ENCODE measurements at regions of chr18 and their contacts with region 1.

Region 1: GRCh38 chr18:77000527-77000926 is 132.1 kb downstream of the MBP start:
- DNase-seq: peak; percentile 74
- CTCF ChIP-seq: peak; percentile 96

Region 2: DNA sequence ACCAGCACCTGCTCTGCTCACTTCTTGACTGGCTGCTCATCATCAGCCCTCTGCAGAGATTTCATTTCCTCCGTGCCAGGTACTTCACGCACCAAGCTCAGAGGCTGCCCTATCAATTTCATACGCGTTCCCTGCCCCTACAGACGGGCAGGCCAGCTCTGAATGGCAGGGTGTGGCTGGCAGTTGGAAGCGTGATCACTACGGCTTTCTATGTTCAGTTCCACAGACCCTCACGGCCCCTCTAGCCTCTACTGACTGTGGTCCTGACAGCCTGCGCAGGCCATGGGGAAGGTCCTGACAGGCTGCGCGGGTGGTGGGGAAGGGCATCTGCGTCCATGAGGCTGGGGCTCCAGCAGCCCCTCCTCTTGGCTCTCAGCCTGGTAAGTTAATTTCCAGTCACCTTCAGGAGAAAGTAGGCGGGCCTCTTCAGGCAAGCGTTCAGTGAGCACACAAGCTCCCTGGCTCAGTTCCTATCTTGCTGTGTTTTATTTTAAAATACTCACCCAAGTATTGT is 23.4 kb before region 1 on chr18:
- CTCF ChIA-PET with region 1: interaction called, 75 read pairs
- POLR2A ChIA-PET with region 1: no interaction called
- DNase-seq: no peak
- CTCF ChIP-seq: no peak

Region 3: GRCh38 chr18:77013811-77014521 is 13.4 kb after region 1 on chr18:
- CTCF ChIA-PET with region 1: interaction called, 40 read pairs
- POLR2A ChIA-PET with region 1: no interaction called
- DNase-seq: no peak
- CTCF ChIP-seq: no peak

Region 4: DNA sequence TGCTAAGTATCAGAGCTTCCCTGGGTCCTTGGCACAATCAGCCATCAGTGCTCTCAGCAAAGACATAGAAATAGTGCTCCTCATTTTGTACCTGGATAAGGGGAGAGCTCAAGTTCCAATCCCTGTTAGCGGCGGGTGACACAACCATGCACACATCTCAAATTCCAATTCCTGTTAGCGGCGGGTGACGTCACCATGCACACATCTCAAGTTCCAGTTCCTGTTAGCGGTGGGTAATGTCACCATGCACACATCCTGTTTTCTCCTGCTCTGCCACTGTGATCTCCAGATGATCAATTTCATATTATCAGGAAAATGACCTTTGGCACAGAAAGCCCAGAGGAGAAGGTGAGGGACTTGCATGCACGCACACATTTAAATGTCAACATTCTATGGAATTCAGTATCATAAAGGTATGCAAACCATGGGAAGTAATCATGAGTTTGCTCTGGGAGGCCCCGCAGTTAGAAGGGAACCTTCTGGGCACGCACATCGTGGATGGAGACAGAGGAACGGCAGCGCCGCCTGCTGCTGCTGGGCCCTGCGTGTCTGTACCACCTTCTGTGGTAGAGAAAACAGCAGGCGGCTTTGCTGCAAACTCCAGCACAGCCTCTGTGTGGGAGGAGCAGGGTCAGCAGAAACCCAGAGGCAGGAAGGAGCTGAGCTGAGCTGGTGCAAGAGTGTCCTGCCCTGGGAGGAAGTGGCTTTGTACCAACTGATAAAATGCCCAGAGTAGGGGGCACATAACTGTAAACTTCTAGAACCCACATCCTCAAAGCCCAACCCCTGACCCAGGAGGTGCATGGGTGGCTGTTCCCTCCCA is 54.3 kb after region 1 on chr18:
- CTCF ChIA-PET with region 1: interaction called, 42 read pairs
- POLR2A ChIA-PET with region 1: no interaction called
- DNase-seq: peak; percentile 84
- CTCF ChIP-seq: peak; percentile 89

Region 5: GRCh38 chr18:77207540-77207939 is 207.0 kb after region 1 on chr18:
- CTCF ChIA-PET with region 1: interaction called, 48 read pairs
- POLR2A ChIA-PET with region 1: no interaction called
- DNase-seq: no peak
- CTCF ChIP-seq: peak; percentile 34

Measured in GM10248 (cell line).